ENCODE measurements at regions of chr1 and their contacts with region 1.

Region 1: DNA sequence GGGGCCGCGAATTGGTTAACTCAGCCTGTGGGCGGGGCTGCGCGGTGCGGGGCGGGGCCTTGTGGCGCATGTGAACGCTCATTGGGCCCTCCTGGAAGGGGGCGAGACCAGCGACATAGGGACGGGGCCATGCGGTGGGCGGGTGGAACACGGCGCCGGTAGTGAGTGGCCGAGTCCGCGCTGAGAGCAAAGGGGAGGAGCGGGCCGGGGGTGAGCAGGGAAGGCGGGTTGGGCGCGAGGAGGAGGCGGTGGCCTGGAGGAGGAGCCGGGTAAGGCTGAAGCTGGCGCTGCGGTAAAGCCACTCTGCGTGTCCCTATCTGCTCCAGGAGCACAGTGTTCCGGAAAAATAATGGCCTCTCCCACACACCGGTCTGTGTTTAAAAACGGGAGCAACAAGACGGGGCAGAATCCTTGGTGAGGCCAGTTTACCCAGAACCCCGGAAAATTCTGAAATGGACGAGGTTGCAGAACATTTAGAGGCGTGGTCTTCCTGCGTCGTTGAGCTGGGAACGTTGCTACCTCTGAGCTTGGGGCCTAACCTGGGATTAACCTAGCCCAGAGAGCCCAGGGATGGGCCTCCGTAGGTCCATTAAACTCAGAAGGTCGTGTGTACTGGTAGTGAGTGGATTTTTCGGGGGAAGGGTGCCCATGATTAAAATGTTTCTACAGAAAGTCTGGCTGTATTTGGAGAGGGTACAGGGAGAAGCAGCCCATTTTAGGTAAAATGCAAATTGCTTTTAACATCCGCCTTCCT is 533 bp upstream of the CTNNBIP1 start:
- DNase-seq: peak; percentile 100
- ATAC-seq: peak; percentile 96
- H3K4me3 Mint-ChIP-seq: peak overlapping the region; percentile 82
- H3K27ac Mint-ChIP-seq: peak overlapping the region; percentile 92
- H3K4me1 Mint-ChIP-seq: peaks cover 23% of the 10 kb centered on the region
- H3K27me3 Mint-ChIP-seq: no peaks in the 10 kb centered on the region

Region 2: GRCh38 chr1:9539165-9539828 is 371.3 kb before region 1 on chr1 and contains the start of gene SLC25A33:
- CTCF ChIA-PET with region 1: no interaction called
- POLR2A ChIA-PET with region 1: no interaction called
- intact Hi-C with region 1: loop called (anchors 1 kb)
- DNase-seq: peak; percentile 99
- ATAC-seq: peak; percentile 99
- H3K4me3 Mint-ChIP-seq: peak within 1 kb of the TSS; percentile 80
- H3K27ac Mint-ChIP-seq: peak within 1 kb of the TSS; percentile 78
- H3K4me1 Mint-ChIP-seq: peaks cover 30% of the 10 kb centered on the region
- H3K27me3 Mint-ChIP-seq: no peaks in the 10 kb centered on the region
- total RNA-seq, gene SLC25A33: 4.4 to 6.1 TPM

Region 3: DNA sequence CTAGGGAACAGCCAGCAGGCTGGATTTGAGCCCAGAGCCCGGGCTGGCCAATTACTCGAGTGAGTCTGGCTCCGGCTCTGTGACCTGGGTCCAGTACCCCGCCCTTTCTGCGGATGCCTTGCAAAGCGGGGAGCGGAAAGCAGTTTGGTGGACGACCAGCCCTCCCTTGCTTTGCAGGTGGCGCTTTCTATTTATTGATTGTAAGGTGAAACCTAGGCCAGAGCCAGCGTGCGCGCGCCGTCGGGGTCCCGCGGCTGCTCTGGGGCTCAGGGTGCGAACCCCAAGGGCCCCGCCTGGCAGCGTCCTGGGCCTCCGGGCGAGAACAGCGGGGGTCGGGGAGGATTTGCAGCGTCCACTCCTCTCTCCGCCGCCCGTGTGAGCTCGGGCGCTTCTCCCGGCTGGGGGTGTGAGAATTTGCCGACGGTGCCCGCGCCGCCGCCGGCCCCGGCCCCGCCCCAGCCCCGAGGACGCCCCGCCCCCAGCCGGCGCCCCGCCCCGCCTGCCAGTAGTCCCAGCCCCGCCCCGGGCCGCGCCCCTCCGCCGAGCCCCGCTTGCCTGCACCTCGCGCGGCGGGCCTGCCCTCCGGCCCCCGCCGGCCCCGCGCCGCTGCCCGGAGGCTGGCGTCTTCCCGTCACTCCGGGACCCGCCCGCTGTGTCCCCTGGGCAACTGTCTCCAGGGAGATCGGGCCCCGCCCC is 221.4 kb before region 1 on chr1:
- CTCF ChIA-PET with region 1: no interaction called
- POLR2A ChIA-PET with region 1: no interaction called
- intact Hi-C with region 1: loop called in 1 of 2 experiments (anchors 1 kb)
- DNase-seq: peak; percentile 93
- ATAC-seq: peak; percentile 78
- H3K4me3 Mint-ChIP-seq: peak overlapping the region; percentile 70
- H3K27ac Mint-ChIP-seq: peak overlapping the region; percentile 77
- H3K4me1 Mint-ChIP-seq: peaks cover 70% of the 10 kb centered on the region
- H3K27me3 Mint-ChIP-seq: no peaks in the 10 kb centered on the region

Region 4: DNA sequence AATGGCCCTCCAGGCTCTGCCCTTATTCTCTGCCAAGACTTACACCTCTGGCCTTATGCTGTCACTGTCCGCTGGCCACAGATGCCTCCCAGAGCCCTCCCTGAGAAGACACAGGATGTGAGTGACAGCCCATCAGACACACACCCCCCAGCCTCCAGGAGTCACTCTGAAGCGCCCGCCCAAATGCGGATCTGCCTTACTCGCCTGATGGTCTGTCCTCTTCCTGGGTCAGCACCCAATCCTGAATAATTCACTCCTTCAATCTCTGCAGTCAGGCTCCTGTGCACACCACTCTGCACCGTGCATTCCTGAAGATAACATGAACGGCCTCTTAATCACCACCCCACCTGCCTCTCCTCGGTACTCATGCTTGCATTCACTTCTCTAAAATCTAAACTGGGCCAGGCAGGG is 101.5 kb before region 1 on chr1:
- CTCF ChIA-PET with region 1: no interaction called
- POLR2A ChIA-PET with region 1: no interaction called
- intact Hi-C with region 1: no loop called
- DNase-seq: no peak
- ATAC-seq: no peak
- H3K4me3 Mint-ChIP-seq: no peak overlapping the region
- H3K27ac Mint-ChIP-seq: no peak overlapping the region
- H3K4me1 Mint-ChIP-seq: peaks cover 32% of the 10 kb centered on the region
- H3K27me3 Mint-ChIP-seq: no peaks in the 10 kb centered on the region

Region 5: DNA sequence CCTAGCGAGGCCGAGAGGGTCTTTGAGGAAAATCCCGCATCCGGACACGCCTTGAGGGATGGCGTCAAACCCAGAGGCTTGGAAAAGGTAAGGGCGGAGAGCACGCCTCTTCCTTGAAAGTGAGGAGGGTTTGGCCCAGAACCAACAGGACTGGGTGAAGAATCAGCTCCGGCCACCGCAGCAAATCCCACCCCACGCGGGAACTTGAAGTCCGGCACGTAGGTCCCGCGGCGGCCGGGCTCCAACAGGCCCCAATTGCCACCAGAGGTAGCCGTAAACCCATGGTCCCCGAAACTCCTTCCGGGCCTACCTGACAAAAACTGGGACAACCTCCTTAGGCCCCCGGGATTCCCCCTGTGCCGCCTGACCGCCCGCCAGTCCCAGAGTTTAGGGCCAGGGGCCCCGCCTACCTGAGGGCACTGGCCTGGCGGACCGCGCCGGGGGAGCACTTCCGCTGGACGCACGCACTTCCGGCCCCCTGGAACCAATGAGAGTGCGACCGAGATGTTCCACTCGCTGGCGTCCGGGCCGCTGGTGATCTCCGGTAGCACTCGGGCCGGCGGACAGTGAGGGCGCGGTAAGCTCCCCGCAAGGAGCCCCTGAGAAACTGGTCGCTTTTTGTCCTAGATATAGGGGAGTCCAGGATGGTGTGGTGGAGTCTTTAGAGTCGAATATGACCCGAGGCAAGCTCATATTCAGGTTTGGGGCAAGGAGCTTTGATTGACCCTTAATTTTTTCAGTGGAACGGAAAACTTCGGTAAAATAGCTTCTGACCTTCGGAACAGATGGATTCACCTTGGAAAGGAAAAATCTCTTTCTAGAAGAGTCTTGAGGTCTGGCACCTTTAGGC is 32.6 kb after region 1 on chr1 and contains the starts of genes LZIC and NMNAT1:
- CTCF ChIA-PET with region 1: interaction called, 11 read pairs
- POLR2A ChIA-PET with region 1: interaction called, 5 read pairs
- intact Hi-C with region 1: loop called (anchors 1 kb)
- DNase-seq: peak; percentile 95
- ATAC-seq: peak; percentile 97
- H3K4me3 Mint-ChIP-seq: peak within 1 kb of the TSS; percentile 96
- H3K27ac Mint-ChIP-seq: peak within 1 kb of the TSS; percentile 98
- H3K4me1 Mint-ChIP-seq: peaks cover 18% of the 10 kb centered on the region
- H3K27me3 Mint-ChIP-seq: no peaks in the 10 kb centered on the region
- total RNA-seq, gene LZIC: 23.4 to 32.0 TPM
- total RNA-seq, gene NMNAT1: 7.3 to 8.5 TPM

Region 6: DNA sequence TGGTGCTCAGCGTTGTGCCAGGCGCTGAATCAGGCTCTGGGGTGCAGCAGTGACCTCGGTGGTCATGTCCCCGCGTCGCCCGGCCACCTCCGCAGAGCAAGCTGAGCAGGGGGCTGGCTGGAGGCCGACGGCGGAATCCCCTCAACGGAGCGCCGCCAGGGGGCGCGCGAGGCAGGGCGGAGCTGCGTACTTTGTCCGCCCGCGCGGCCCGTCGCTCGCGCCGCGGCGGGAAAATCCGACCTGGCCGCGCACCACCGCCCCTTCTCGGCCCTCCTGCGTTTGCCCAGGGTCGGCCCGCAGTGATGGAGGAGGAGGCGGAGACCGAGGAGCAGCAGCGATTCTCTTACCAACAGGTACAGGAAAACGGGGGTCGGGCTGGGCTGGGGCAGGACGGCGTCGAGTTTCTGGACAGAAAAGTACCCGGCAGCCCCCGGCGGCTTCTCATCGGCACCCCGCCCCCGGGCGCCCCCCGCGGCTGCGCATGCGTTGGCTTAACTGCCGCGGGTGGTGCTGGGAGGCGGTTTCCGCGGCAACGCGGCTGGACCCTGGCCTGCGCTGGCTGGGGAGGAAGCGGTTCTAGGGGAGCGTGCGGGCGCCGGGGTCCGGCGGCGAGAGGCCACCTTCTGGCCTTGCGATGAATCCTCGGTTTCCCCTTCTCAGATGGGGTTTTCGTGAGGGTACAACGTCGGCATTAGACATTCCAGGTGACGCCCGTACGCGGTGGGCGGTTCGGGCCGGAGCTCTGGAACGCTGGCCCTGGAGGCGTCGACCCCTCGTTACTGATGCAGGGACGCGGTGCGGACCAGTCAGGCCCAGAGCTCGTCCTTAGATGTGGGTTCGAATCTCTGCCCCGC is 519.8 kb after region 1 on chr1 and contains the start of gene CENPS:
- CTCF ChIA-PET with region 1: no interaction called
- POLR2A ChIA-PET with region 1: no interaction called
- intact Hi-C with region 1: loop called in 1 of 2 experiments (anchors 1 kb)
- DNase-seq: peak; percentile 91
- ATAC-seq: peak; percentile 83
- H3K4me3 Mint-ChIP-seq: peak within 1 kb of the TSS; percentile 76
- H3K27ac Mint-ChIP-seq: peak within 1 kb of the TSS; percentile 92
- H3K4me1 Mint-ChIP-seq: peaks cover 22% of the 10 kb centered on the region
- H3K27me3 Mint-ChIP-seq: no peaks in the 10 kb centered on the region
- total RNA-seq, gene CENPS: 18.1 to 22.8 TPM

Region 7: GRCh38 chr1:11012250-11013171 is 1101.9 kb after region 1 on chr1 and contains the start of gene TARDBP:
- CTCF ChIA-PET with region 1: no interaction called
- POLR2A ChIA-PET with region 1: no interaction called
- intact Hi-C with region 1: loop called in 1 of 2 experiments (anchors 1 kb)
- DNase-seq: peak; percentile 94
- ATAC-seq: peak; percentile 89
- H3K4me3 Mint-ChIP-seq: peak within 1 kb of the TSS; percentile 93
- H3K27ac Mint-ChIP-seq: peak within 1 kb of the TSS; percentile 99
- H3K4me1 Mint-ChIP-seq: peaks cover 30% of the 10 kb centered on the region
- H3K27me3 Mint-ChIP-seq: no peaks in the 10 kb centered on the region
- total RNA-seq, gene TARDBP: 180 to 190 TPM

Measured in activated CD4-positive, alpha-beta T cell treated with anti-CD3 and anti-CD28 coated beads for 36 hours (primary cell).